Colonic mucosa (tissue), 4 donors: ENCODE measurements at regions of chr14 and their contacts with region 1.

Region 1: DNA sequence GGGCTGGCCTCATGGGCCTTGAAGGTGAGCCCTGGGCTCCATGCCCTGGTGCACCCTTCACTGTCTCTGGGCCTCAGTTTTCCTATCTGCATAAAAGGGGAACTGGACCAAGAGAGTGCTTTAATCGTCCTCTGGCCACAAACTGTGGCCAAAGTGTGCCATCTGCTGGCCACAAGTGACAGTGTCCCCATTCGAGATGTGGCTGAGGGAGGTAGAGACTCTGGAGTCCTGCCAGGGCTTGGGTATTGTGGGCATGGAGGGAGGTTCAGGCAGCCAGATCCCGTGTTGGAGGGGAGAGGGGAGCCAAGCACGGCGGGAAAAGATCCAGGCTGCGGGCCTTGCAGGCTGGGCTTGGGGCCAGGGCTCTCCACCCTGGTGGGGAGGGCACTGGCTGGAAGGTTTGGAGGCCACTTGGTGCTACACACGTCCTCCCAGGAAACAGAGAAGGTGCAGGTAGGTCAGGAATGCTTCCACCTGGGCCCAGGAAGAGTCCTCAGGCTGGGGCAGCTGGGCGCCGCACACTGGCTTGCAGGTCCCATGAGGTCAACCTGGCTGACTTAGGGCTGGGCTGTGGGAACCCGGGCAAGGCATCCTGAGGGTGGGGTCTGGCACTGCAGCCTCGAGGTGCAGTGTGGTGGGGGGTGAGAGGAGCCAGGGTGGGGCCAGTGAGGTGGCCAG is 7.3 kb upstream of the KIF26A start:
- DNase-seq: peak; percentile 69
- H3K4me3 ChIP-seq: no peak overlapping the region
- H3K27ac ChIP-seq: no peak overlapping the region
- H3K4me1 ChIP-seq: no peaks in the 10 kb centered on the region
- H3K27me3 ChIP-seq: peaks cover 26% of the 10 kb centered on the region
- CTCF ChIP-seq: peak; percentile 66

Region 2: DNA sequence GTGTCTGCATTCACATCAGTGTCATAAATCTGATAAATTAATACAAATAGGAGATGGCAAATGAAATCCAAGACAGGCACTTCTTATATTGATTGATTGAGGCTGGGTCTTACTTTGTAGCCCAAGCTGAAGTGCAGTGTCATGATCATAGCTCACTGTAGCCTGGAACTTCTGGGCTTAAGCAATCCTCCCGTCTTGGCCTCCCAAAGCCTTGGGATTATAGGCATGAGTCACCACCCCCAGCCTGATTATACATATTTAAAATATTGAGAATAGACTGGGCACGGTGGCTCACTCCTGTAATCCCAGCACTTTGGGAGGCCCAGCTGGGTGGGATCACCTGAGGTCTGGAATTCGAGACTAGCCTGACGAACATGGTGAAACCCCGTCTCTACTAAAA is 694.6 kb before region 1 on chr14:
- intact Hi-C with region 1: no loop called
- DNase-seq: no peak
- H3K4me3 ChIP-seq: no peak overlapping the region
- H3K27ac ChIP-seq: no peak overlapping the region
- H3K4me1 ChIP-seq: no peaks in the 10 kb centered on the region
- H3K27me3 ChIP-seq: no peaks in the 10 kb centered on the region
- CTCF ChIP-seq: no peak

Region 3: DNA sequence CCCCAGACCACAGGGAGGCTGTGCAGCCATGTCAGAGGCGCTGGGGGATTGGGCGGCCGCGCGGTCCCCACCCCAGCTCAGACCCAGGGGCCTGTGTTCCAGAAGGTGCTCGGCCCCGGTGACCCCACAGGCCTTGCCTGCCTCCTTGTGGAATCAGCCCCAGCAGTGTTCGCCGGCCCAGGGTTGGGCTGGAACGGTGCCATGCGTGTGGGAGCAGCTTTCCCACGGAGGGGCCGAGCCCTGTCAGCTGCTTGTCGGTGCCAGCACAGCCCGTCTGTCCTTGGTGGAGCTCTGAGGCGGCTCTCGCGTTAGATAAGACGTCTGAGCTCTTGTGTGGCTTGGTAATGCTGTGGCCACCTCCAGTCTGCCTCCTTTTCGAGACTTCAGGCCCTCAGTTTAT is 407.0 kb before region 1 on chr14:
- intact Hi-C with region 1: no loop called
- DNase-seq: no peak
- H3K4me3 ChIP-seq: no peak overlapping the region
- H3K27ac ChIP-seq: no peak overlapping the region
- H3K4me1 ChIP-seq: peaks cover 7% of the 10 kb centered on the region
- H3K27me3 ChIP-seq: no peaks in the 10 kb centered on the region
- CTCF ChIP-seq: no peak

Region 4: GRCh38 chr14:104078031-104078455 is 53.1 kb before region 1 on chr14:
- intact Hi-C with region 1: loop called (anchors 2 kb)
- DNase-seq: peak; percentile 92
- H3K4me3 ChIP-seq: no peak overlapping the region
- H3K27ac ChIP-seq: no peak overlapping the region
- H3K4me1 ChIP-seq: peaks cover 19% of the 10 kb centered on the region
- H3K27me3 ChIP-seq: no peaks in the 10 kb centered on the region
- CTCF ChIP-seq: peak; percentile 99

Region 5: GRCh38 chr14:104094709-104095438 is 36.2 kb before region 1 on chr14:
- intact Hi-C with region 1: loop called (anchors 5 kb)
- DNase-seq: peak; percentile 82
- H3K4me3 ChIP-seq: no peak overlapping the region
- H3K27ac ChIP-seq: no peak overlapping the region
- H3K4me1 ChIP-seq: peaks cover 2% of the 10 kb centered on the region
- H3K27me3 ChIP-seq: no peaks in the 10 kb centered on the region
- CTCF ChIP-seq: peak; percentile 97